PC-9 (cell line): ENCODE measurements at regions of chr1 and their contacts with region 1.

Region 1: GRCh38 chr1:37682334-37682987 is 9.9 kb upstream of the CDCA8 start:
- DNase-seq: peak in 1 of 2 experiments; percentile 66
- H3K4me3 ChIP-seq: no peak overlapping the region
- H3K27ac ChIP-seq: no peak overlapping the region
- H3K4me1 ChIP-seq: no peaks in the 10 kb centered on the region
- H3K27me3 ChIP-seq: no peaks in the 10 kb centered on the region
- CTCF ChIP-seq: peak; percentile 96

Region 2: DNA sequence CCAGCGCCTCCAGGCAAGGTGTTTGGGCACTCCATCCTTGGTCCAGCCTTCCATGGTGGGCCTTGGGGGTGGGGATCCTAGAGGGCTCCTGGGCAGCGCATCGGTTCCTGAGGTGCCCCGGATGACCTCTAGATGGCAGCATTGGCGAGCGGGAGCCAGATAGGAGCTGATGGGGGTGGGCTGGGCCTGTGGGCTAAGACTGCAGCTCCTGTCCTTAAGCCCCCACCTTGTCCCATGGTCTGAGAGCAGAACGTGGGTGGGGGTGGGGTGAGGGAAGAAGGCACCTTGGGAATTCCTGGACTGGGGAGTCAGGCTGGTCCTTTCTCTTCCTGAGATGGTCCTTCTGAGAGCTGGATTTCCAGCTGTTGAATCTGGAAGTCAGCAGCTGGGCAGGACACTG is 1106.3 kb before region 1 on chr1:
- CTCF ChIA-PET with region 1: no interaction called
- POLR2A ChIA-PET with region 1: no interaction called
- intact Hi-C with region 1: loop called (anchors 1 kb)
- DNase-seq: peak; percentile 48 to 64
- H3K4me3 ChIP-seq: no peak overlapping the region
- H3K27ac ChIP-seq: no peak overlapping the region
- H3K4me1 ChIP-seq: no peaks in the 10 kb centered on the region
- H3K27me3 ChIP-seq: peaks cover 30% of the 10 kb centered on the region
- CTCF ChIP-seq: peak; percentile 87

Region 3: GRCh38 chr1:36703526-36704208 is 978.8 kb before region 1 on chr1:
- CTCF ChIA-PET with region 1: no interaction called
- POLR2A ChIA-PET with region 1: no interaction called
- intact Hi-C with region 1: loop called (anchors 5 kb)
- DNase-seq: peak; percentile 53 to 68
- H3K4me3 ChIP-seq: no peak overlapping the region
- H3K27ac ChIP-seq: no peak overlapping the region
- H3K4me1 ChIP-seq: peaks cover 17% of the 10 kb centered on the region; the same call in 1 of the 2 replicates
- H3K27me3 ChIP-seq: peaks cover 72% of the 10 kb centered on the region
- CTCF ChIP-seq: peak; percentile 87

Region 4: GRCh38 chr1:37449936-37450335 is 232.5 kb before region 1 on chr1:
- CTCF ChIA-PET with region 1: interaction called, 12 read pairs
- POLR2A ChIA-PET with region 1: no interaction called
- intact Hi-C with region 1: loop called (anchors 1 kb)
- DNase-seq: no peak
- H3K4me3 ChIP-seq: no peak overlapping the region
- H3K27ac ChIP-seq: no peak overlapping the region
- H3K4me1 ChIP-seq: peaks cover 18% of the 10 kb centered on the region
- H3K27me3 ChIP-seq: no peaks in the 10 kb centered on the region
- CTCF ChIP-seq: no peak

Region 5: GRCh38 chr1:37458528-37458927 is 223.9 kb before region 1 on chr1:
- CTCF ChIA-PET with region 1: no interaction called
- POLR2A ChIA-PET with region 1: no interaction called
- intact Hi-C with region 1: loop called (anchors 1 kb)
- DNase-seq: no peak
- H3K4me3 ChIP-seq: no peak overlapping the region
- H3K27ac ChIP-seq: no peak overlapping the region
- H3K4me1 ChIP-seq: peaks cover 8% of the 10 kb centered on the region
- H3K27me3 ChIP-seq: no peaks in the 10 kb centered on the region
- CTCF ChIP-seq: no peak; the same call in 1 of the 2 replicates

Region 6: DNA sequence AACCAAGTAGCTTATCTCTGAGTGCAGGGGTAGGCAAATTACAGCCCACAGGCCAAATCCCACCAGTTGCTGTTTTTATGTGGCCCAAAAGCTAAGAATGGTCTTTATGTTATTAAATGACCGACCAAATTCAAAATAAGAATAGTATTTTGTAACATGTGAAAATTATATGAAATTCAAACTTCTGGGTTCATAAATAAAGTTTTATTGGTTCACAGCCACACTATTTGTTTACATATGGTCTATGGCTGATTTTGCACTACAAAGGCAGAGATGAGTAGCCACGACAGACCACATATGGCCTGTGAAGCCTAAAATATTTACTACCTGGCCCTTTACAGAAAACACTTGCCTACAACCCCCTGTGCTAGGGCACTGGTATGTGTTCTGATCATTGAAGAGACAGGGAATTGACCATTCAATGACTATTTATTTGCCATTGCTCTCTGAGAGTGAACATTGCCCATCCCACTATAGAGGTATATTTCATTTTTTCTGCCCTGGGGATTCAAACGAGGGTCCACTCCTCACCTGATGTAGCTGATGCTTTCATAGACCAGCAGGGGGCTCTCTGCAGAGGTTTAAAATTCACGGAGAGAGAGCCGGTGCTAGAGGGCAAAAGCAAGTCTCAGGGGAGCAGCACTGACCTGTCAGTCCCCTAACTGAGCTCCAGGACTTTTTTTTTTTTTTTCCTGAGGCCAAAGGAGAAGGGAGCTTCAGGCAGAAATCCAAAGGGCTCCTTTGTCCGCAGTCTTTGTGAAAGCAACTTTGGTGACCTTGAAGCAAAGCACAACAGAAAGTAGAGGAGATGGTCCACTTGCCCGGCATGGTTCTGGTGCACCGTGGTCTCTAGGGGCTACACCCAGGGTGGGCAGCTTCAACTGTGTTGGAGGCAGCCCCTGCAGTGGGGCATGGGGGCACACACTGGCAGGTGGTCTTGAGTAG is 79.4 kb before region 1 on chr1:
- CTCF ChIA-PET with region 1: interaction called, 3 read pairs
- POLR2A ChIA-PET with region 1: no interaction called
- intact Hi-C with region 1: loop called (anchors 1 kb)
- DNase-seq: peak; percentile 24 to 31
- H3K4me3 ChIP-seq: no peak overlapping the region
- H3K27ac ChIP-seq: no peak overlapping the region
- H3K4me1 ChIP-seq: no peaks in the 10 kb centered on the region
- H3K27me3 ChIP-seq: peaks cover 48% of the 10 kb centered on the region
- CTCF ChIP-seq: peak; percentile 81

Region 7: DNA sequence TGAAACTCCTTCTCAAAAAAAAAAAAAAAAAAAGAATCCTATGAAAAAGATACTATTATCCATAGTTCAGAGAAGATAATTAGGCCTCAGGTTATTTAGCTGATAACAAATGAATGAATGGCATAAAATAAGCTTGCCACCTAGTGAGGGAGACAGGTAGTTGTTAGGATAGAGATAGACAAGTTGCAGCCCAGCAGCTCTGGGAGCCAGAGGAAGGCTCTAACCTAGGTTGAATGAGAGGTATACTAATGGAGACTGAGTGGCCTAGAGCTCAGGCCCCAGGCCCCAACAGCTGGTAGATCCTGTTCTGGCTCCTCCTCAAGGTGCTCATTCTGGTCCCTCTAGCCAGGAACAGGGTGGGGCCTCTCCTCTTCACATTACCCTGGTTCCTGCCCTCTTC is 27.2 kb before region 1 on chr1:
- CTCF ChIA-PET with region 1: no interaction called
- POLR2A ChIA-PET with region 1: no interaction called
- intact Hi-C with region 1: no loop called
- DNase-seq: no peak
- H3K4me3 ChIP-seq: no peak overlapping the region
- H3K27ac ChIP-seq: no peak overlapping the region
- H3K4me1 ChIP-seq: no peaks in the 10 kb centered on the region
- H3K27me3 ChIP-seq: peaks cover 33% of the 10 kb centered on the region
- CTCF ChIP-seq: no peak

Region 8: GRCh38 chr1:37726751-37727585 is 44.5 kb after region 1 on chr1:
- CTCF ChIA-PET with region 1: no interaction called
- POLR2A ChIA-PET with region 1: no interaction called
- intact Hi-C with region 1: no loop called
- DNase-seq: no peak
- H3K4me3 ChIP-seq: no peak overlapping the region
- H3K27ac ChIP-seq: no peak overlapping the region
- H3K4me1 ChIP-seq: no peaks in the 10 kb centered on the region
- H3K27me3 ChIP-seq: no peaks in the 10 kb centered on the region
- CTCF ChIP-seq: no peak

Region 9: GRCh38 chr1:37807555-37808368 is 125.3 kb after region 1 on chr1 and contains the starts of genes C1orf122 and YRDC:
- CTCF ChIA-PET with region 1: no interaction called
- POLR2A ChIA-PET with region 1: interaction called, 23 read pairs
- intact Hi-C with region 1: no loop called
- DNase-seq: peak; percentile 86 to 95
- H3K4me3 ChIP-seq: peak within 1 kb of the TSS; percentile 71
- H3K27ac ChIP-seq: peak within 1 kb of the TSS; percentile 63
- H3K4me1 ChIP-seq: peaks cover 20% of the 10 kb centered on the region
- H3K27me3 ChIP-seq: no peaks in the 10 kb centered on the region
- CTCF ChIP-seq: no peak
- total RNA-seq, gene C1orf122: 51.8 and 75.8 TPM in 2 replicates
- total RNA-seq, gene YRDC: 13.2 and 16.0 TPM in 2 replicates